B cell (primary cell): ENCODE measurements at regions of chr12 and their contacts with region 1.

Region 1: GRCh38 chr12:62351326-62351725 is 91.1 kb downstream of the USP15 start:
- DNase-seq: no peak
- ATAC-seq: no peak
- H3K4me3 ChIP-seq: no peak overlapping the region
- H3K4me3 Mint-ChIP-seq: no peak overlapping the region
- H3K27ac ChIP-seq: no peak overlapping the region
- H3K27ac Mint-ChIP-seq: no peak overlapping the region
- H3K4me1 ChIP-seq: no peaks in the 10 kb centered on the region
- H3K4me1 Mint-ChIP-seq: peaks cover 4% of the 10 kb centered on the region
- H3K27me3 ChIP-seq: no peaks in the 10 kb centered on the region
- H3K27me3 Mint-ChIP-seq: no peaks in the 10 kb centered on the region
- CTCF ChIP-seq: no peak

Region 2: DNA sequence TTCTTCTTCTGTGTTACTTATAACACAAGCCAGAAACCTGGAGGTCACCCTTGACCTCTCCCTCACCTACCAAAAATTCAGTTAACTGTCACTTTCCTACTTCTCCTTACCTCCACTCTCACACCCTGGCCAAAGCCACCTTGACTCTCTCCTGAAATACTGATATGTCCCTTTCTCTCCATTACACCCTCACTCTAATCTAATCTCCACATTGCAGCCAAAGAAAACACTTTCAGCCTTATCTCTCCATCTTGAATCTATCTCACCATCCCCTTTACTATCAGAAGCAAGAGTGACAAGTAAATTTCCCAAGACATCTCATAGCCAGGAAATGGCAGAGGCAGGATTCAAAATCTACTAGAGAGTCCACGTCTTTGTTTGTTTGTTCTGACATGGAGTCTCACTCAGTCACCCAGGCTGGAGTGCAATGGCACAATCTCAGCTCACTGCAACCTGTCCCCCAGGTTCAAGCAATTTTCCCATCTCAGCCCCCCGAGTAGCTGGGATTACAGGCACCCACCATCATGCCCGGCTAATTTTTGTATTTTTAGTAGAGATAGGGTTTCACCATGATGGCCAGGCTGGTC is 119.1 kb before region 1 on chr12:
- CTCF ChIA-PET with region 1: no interaction called
- POLR2A ChIA-PET with region 1: no interaction called
- intact Hi-C with region 1: no loop called
- DNase-seq: no peak
- ATAC-seq: no peak
- H3K4me3 ChIP-seq: no peak overlapping the region
- H3K4me3 Mint-ChIP-seq: no peak overlapping the region
- H3K27ac ChIP-seq: no peak overlapping the region
- H3K27ac Mint-ChIP-seq: no peak overlapping the region
- H3K4me1 ChIP-seq: no peaks in the 10 kb centered on the region
- H3K4me1 Mint-ChIP-seq: no peaks in the 10 kb centered on the region
- H3K27me3 ChIP-seq: no peaks in the 10 kb centered on the region
- H3K27me3 Mint-ChIP-seq: peaks cover 6% of the 10 kb centered on the region
- CTCF ChIP-seq: no peak

Region 3: DNA sequence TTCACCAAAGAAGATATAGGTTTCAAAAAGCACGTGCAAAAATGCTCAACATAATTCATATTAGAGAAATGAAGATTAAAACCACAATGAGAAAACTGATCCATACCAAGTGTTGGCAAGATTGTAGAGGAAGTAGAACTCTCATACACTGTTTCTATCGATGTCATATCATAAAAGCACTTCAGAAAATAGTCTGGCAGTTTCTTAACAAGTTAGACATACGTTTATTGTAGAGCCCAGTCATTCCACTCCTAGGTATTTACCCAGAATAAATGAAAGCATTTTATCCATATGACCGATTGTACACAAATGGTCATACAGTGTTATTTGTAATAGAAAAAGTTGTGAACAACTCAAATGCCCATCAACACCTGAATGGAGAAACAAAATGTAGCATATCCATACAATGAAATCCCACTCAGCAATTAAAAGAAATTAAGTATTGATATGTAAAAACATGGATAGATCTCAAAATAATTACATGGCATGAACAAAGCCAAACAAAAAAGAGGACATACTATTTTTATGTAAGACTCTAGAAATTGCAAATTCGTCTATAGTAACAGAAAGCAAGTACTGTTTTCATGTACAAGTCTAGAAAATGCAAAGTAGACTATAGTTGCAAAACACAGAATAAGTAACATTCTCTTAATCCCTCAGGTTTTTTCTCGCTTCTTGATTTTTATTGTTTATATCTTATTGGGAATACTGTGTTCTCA is 50.1 kb before region 1 on chr12:
- CTCF ChIA-PET with region 1: no interaction called
- POLR2A ChIA-PET with region 1: no interaction called
- intact Hi-C with region 1: loop called (anchors 10 kb)
- DNase-seq: no peak
- ATAC-seq: no peak
- H3K4me3 ChIP-seq: no peak overlapping the region
- H3K4me3 Mint-ChIP-seq: no peak overlapping the region
- H3K27ac ChIP-seq: no peak overlapping the region
- H3K27ac Mint-ChIP-seq: no peak overlapping the region
- H3K4me1 ChIP-seq: no peaks in the 10 kb centered on the region
- H3K4me1 Mint-ChIP-seq: peaks cover 41% of the 10 kb centered on the region
- H3K27me3 ChIP-seq: no peaks in the 10 kb centered on the region
- H3K27me3 Mint-ChIP-seq: no peaks in the 10 kb centered on the region
- CTCF ChIP-seq: no peak

Region 4: DNA sequence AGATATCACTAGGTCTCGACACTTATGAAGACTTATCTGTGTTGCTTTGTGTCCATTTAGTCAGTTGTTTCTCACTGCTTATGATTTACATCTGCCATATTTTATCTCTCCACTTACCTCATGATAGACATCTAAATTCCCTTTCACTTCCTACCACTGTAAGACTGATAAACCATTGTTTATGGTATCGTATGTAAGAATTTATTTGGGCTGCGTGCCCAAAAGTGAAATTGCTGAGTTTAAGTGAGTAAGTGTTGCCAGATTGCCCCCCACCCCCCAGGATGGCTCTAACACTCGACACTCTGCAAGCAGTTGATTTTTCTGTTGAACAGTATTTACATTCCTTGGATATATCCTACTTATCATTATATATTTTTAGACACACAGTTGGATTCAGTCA is 45.4 kb after region 1 on chr12:
- CTCF ChIA-PET with region 1: no interaction called
- POLR2A ChIA-PET with region 1: no interaction called
- intact Hi-C with region 1: no loop called
- DNase-seq: no peak
- ATAC-seq: no peak
- H3K4me3 ChIP-seq: no peak overlapping the region
- H3K4me3 Mint-ChIP-seq: no peak overlapping the region
- H3K27ac ChIP-seq: no peak overlapping the region
- H3K27ac Mint-ChIP-seq: no peak overlapping the region
- H3K4me1 ChIP-seq: peaks cover 0 to 10% of the 10 kb centered on the region in 2 donors
- H3K4me1 Mint-ChIP-seq: peaks cover 22% of the 10 kb centered on the region
- H3K27me3 ChIP-seq: no peaks in the 10 kb centered on the region
- H3K27me3 Mint-ChIP-seq: no peaks in the 10 kb centered on the region
- CTCF ChIP-seq: no peak

Region 5: DNA sequence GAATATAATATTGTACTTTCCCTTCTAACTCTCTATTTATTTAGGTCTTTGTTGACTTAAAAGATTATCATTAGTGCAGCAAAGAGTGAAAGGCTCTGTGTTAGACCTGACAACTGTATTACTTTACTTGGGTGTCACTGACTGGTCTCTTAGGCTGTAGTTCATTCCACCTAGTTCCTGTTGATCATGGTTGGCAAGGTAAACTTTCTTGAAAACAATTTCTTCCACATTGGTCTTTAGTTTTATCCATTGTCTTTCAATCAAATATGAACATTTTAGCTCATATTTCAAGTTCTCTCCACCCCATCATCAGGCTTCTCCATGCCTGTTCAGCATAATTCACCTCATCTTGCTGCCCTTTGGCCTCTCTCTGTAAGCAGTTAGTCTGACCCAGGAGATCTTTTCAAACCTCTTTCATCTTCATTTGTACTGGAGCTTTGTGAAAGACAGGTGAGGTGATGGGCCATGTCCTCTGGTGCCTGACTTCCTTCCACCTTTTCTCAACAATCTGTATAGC is 615.7 kb after region 1 on chr12:
- CTCF ChIA-PET with region 1: no interaction called
- POLR2A ChIA-PET with region 1: no interaction called
- intact Hi-C with region 1: no loop called
- DNase-seq: no peak
- ATAC-seq: no peak
- H3K4me3 ChIP-seq: no peak overlapping the region
- H3K4me3 Mint-ChIP-seq: no peak overlapping the region
- H3K27ac ChIP-seq: no peak overlapping the region
- H3K27ac Mint-ChIP-seq: no peak overlapping the region
- H3K4me1 ChIP-seq: no peaks in the 10 kb centered on the region
- H3K4me1 Mint-ChIP-seq: no peaks in the 10 kb centered on the region
- H3K27me3 ChIP-seq: no peaks in the 10 kb centered on the region
- H3K27me3 Mint-ChIP-seq: peaks cover 2% of the 10 kb centered on the region
- CTCF ChIP-seq: no peak